ENCODE measurements at regions of chr1 and their contacts with region 1.

Region 1: DNA sequence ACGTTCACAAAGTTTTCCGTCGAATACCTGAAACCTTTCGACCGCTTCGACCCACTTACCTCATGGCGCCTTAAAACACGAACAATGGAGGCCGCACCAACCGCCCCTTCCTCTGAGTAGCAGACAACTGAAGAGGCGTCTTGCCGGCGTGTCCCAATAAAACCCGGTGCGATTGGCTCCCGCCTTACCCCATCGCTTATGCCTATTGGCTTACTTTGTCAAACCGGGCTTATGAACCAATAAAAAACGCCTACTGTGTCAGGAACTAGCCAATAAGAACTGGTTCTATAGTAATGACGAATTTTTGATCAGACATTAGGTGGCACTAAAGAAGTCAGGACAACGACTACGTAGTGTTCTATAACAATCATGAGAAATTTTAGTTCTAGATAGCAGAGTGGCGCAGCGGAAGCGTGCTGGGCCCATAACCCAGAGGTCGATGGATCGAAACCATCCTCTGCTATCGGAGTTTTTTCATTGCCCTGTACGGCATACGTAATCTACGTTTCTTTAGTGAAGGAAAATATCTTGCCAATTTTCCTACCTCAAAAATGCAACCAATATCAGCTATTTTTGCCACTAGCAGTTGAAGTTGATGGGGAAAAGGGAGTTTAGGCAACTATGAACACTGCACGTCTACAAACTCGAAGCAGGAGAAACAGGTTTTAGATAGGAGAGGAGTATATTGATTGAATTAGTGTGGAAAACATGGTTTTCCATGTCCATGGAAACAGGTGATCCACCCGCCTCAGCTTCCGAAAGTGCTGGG is at the start of gene ILF2:
- DNase-seq: peak; percentile 96 to 99
- H3K4me3 ChIP-seq: peak within 1 kb of the TSS; percentile 89 to 100 (median 99)
- H3K27ac ChIP-seq: peak within 1 kb of the TSS; percentile 95
- H3K4me1 ChIP-seq: peaks cover 0 to 4% (median 2%) of the 10 kb centered on the region in 4 experiments; a peak in 2 of 7 replicates
- H3K27me3 ChIP-seq: no peaks in the 10 kb centered on the region
- CTCF ChIP-seq: peak in 1 of 3 experiments; percentile 27; a peak in 1 of 4 replicates
- EP300 ChIP-seq: no peak
- POLR2A ChIP-seq: peak; percentile 90 to 95
- RAD21 ChIP-seq: no peak
- total RNA-seq, gene ILF2: 387 and 389 TPM in 2 replicates

Region 2: GRCh38 chr1:153592748-153593147 is 78.3 kb before region 1 on chr1:
- CTCF ChIA-PET with region 1: no interaction called
- POLR2A ChIA-PET with region 1: no interaction called
- DNase-seq: no peak
- H3K4me3 ChIP-seq: no peak overlapping the region
- H3K27ac ChIP-seq: no peak overlapping the region
- H3K4me1 ChIP-seq: no peaks in the 10 kb centered on the region
- H3K27me3 ChIP-seq: no peaks in the 10 kb centered on the region
- CTCF ChIP-seq: no peak
- EP300 ChIP-seq: no peak
- POLR2A ChIP-seq: no peak
- RAD21 ChIP-seq: no peak

Region 3: GRCh38 chr1:153608742-153609584 is 62.1 kb before region 1 on chr1:
- CTCF ChIA-PET with region 1: no interaction called
- POLR2A ChIA-PET with region 1: no interaction called
- DNase-seq: peak; percentile 41 to 90
- H3K4me3 ChIP-seq: no peak overlapping the region
- H3K27ac ChIP-seq: no peak overlapping the region
- H3K4me1 ChIP-seq: peaks cover 0 to 35% (median 21%) of the 10 kb centered on the region in 4 experiments; a peak in 6 of 7 replicates
- H3K27me3 ChIP-seq: no peaks in the 10 kb centered on the region; a peak in 1 of 7 replicates
- CTCF ChIP-seq: no peak
- EP300 ChIP-seq: no peak
- POLR2A ChIP-seq: no peak
- RAD21 ChIP-seq: no peak

Region 4: DNA sequence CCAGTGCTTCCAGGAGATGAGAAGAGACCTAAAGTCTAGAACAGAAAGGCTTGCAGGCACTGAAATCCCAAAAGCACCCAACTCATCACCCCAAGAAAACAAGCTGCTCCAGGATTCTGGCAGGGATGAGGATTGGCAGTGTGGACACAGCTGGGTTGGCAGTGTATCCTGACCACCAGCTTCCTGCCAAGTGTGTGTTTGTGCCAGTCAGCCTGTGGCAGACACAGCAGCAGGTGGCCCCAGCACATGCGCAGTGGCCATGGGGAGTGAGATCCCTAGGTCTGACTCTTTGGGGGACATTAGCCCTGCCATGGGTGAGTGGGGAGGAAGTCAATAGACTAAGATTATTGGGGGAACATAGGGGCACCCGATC is 21.2 kb before region 1 on chr1:
- CTCF ChIA-PET with region 1: interaction called, 5 read pairs
- POLR2A ChIA-PET with region 1: interaction called, 343 read pairs
- DNase-seq: no peak
- H3K4me3 ChIP-seq: no peak overlapping the region
- H3K27ac ChIP-seq: no peak overlapping the region
- H3K4me1 ChIP-seq: peaks cover 0 to 3% (median 0%) of the 10 kb centered on the region in 4 experiments; a peak in 1 of 7 replicates
- H3K27me3 ChIP-seq: no peaks in the 10 kb centered on the region
- CTCF ChIP-seq: no peak
- EP300 ChIP-seq: no peak
- POLR2A ChIP-seq: no peak
- RAD21 ChIP-seq: no peak

Region 5: GRCh38 chr1:153688276-153688675 is 17.2 kb after region 1 on chr1:
- CTCF ChIA-PET with region 1: interaction called, 10 read pairs
- POLR2A ChIA-PET with region 1: no interaction called
- DNase-seq: no peak
- H3K4me3 ChIP-seq: no peak overlapping the region
- H3K27ac ChIP-seq: no peak overlapping the region
- H3K4me1 ChIP-seq: no peaks in the 10 kb centered on the region
- H3K27me3 ChIP-seq: no peaks in the 10 kb centered on the region
- CTCF ChIP-seq: no peak
- EP300 ChIP-seq: no peak
- POLR2A ChIP-seq: no peak
- RAD21 ChIP-seq: no peak

Region 6: GRCh38 chr1:153775458-153776327 is 104.7 kb after region 1 on chr1:
- CTCF ChIA-PET with region 1: interaction called, 172 read pairs
- POLR2A ChIA-PET with region 1: interaction called, 19 read pairs
- DNase-seq: peak; percentile 70 to 92
- H3K4me3 ChIP-seq: peak overlapping the region; percentile 66 to 86 (median 83)
- H3K27ac ChIP-seq: peak overlapping the region; percentile 82
- H3K4me1 ChIP-seq: peaks cover 0 to 17% (median 11%) of the 10 kb centered on the region in 4 experiments; a peak in 6 of 7 replicates
- H3K27me3 ChIP-seq: no peaks in the 10 kb centered on the region; a peak in 1 of 7 replicates
- CTCF ChIP-seq: no peak; a peak in 1 of 4 replicates
- EP300 ChIP-seq: 0 out of 3 replicates have a peak, but pooled peaks of 1 of the 2 experiments have one; percentile 51
- POLR2A ChIP-seq: peak; percentile 70 to 93
- RAD21 ChIP-seq: peak in 1 of 2 experiments; percentile 2; a peak in 1 of 4 replicates